A549 (cell line): ENCODE measurements at regions of chr6 and their contacts with region 1.

Region 1: DNA sequence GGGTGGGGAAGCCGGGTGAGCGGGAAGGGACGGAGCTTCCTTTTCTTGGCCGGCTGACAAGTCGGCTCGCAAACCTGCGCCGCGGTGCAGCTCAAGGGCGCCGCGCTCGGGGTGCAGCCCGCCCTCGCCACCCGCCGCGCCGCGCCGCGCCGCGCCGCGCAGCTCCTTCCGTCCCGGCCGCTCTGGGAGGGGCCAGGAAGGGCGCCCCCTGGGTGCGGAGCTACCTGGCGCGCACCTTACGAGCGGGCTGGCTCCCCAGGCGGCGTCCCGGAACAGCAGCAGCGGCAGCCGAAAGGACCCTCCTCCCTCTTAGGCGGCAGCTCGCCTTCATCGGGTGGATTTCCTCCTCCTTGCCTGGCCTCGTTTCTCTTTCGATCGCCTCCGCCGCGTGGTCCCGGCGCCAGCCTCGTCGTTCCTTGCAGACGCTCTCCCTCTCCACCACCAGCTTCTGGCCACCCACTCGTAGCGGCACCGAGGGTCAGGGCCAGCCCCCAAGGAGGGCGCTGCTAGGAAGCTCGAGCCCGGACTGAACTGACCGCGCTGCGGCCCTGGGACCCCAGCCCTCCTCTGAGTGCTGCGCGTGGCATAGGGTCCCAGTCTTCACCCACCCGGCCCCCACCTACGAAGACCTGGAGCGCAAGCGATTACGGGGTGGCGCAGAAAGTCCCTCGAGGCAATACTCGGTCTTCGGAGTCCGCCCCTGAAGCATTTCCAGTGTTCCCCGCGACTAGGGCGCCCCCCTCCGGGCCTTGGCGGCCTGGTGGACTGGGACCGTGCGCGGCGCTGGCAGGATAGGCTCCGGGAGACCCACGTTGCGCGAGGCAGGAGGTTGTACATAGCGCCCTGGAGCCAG is at the start of gene MAP3K5:
- DNase-seq: peak; percentile 36 to 84
- ATAC-seq: peak; percentile 87 to 92
- H3K4me3 ChIP-seq: peak within 1 kb of the TSS; percentile 83
- H3K27ac ChIP-seq: peak within 1 kb of the TSS; percentile 95
- H3K4me1 ChIP-seq: peaks cover 12% of the 10 kb centered on the region; the same call in 2 of the 3 replicates
- CTCF ChIP-seq: peak; percentile 57
- EP300 ChIP-seq: no peak
- POLR2A ChIP-seq: peak; percentile 30
- RAD21 ChIP-seq: peak; percentile 78 to 88
- polyA plus RNA-seq, gene MAP3K5: 4.1 and 4.4 TPM in 2 replicates

Region 2: GRCh38 chr6:136582711-136583471 is 209.7 kb before region 1 on chr6:
- CTCF ChIA-PET with region 1: interaction called, 41 read pairs
- POLR2A ChIA-PET with region 1: interaction called, 4 read pairs
- DNase-seq: peak; percentile 50 to 81
- ATAC-seq: peak; percentile 64 to 86; a peak in 4 of 6 replicates
- H3K4me3 ChIP-seq: no peak overlapping the region
- H3K27ac ChIP-seq: peak overlapping the region in 1 of 2 experiments; percentile 21; a peak in 3 of 6 replicates
- H3K4me1 ChIP-seq: peaks cover 13% of the 10 kb centered on the region
- CTCF ChIP-seq: peak; percentile 68
- EP300 ChIP-seq: no peak
- POLR2A ChIP-seq: no peak
- RAD21 ChIP-seq: peak; percentile 54 to 68

Region 3: GRCh38 chr6:136613477-136613876 is 179.2 kb before region 1 on chr6:
- CTCF ChIA-PET with region 1: interaction called, 17 read pairs
- POLR2A ChIA-PET with region 1: interaction called, 4 read pairs
- DNase-seq: peak in 1 of 2 experiments; percentile 36
- ATAC-seq: no peak
- H3K4me3 ChIP-seq: no peak overlapping the region
- H3K27ac ChIP-seq: peak overlapping the region; percentile 36 to 66; a peak in 4 of 6 replicates
- H3K4me1 ChIP-seq: peaks cover 39% of the 10 kb centered on the region
- CTCF ChIP-seq: no peak
- EP300 ChIP-seq: no peak
- POLR2A ChIP-seq: no peak
- RAD21 ChIP-seq: no peak

Region 4: DNA sequence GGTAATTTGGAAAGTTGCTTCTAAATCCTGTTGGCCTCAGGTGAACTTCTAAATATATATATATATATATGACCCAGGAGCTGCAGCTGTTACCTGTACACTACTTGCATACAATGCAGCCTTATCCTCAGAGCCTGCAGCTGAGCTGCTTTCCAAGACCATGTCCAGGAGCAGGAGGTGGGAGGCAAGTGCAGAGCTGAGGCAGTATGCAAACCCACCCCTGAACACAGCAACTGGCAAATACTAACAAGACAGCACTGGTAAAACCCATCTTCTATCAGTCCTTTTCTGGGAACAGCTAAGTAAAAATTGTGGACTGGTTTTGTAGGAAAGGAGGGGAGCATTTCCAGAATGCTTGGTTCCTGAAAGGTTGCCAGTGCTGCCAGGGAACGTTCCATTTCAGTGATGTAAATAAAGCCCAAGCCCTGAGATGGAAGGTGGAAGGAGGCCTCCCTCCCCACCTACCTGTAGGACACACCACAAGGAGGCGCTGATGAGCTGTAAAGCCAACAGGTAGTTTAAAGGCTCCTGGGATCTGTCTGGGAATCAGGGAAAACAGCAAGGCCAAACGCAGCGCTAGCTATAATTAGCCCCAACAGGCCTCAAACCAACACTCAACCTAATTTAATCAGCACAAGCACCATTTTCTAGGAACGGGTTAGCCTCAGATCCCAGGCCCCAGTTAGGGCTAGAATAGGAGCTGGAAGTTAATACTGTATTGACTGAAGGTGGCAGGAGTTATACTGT is 148.6 kb before region 1 on chr6:
- CTCF ChIA-PET with region 1: interaction called, 146 read pairs
- POLR2A ChIA-PET with region 1: interaction called, 15 read pairs
- DNase-seq: peak; percentile 26 to 83
- ATAC-seq: peak; percentile 99 to 100
- H3K4me3 ChIP-seq: no peak overlapping the region
- H3K27ac ChIP-seq: 0 out of 6 replicates have a peak overlapping the region, but pooled peaks of 1 of the 2 experiments have one; percentile 6
- H3K4me1 ChIP-seq: 0 out of 3 replicates have a peak, but pooled peaks cover 6% of the 10 kb centered on the region
- CTCF ChIP-seq: peak; percentile 84
- EP300 ChIP-seq: no peak
- POLR2A ChIP-seq: no peak
- RAD21 ChIP-seq: peak; percentile 84 to 85

Region 5: DNA sequence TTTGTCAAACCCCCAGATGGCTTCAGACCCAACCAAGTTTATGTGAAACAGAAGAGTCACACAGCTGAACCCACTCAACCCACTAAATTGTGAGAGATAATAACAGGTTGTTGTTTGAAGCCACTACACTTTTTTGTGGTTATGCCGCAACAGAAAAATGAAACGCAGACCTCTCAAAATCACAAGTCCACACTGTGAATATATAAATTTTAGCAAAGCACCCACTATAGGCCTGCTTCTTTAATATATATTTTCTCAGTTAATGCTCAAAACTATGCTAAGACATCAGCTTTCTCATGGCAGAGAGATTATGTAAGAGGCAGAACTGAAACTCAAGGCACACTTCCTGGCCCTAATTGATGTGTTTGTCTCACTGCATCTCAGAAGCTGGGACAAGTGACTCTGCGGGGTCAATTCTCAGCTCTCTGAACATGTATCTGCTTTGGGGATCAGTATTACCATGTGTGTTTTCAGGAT is 28.1 kb before region 1 on chr6:
- CTCF ChIA-PET with region 1: interaction called, 10 read pairs
- POLR2A ChIA-PET with region 1: no interaction called
- DNase-seq: no peak
- ATAC-seq: no peak
- H3K4me3 ChIP-seq: no peak overlapping the region
- H3K27ac ChIP-seq: no peak overlapping the region
- H3K4me1 ChIP-seq: peaks cover 7% of the 10 kb centered on the region; the same call in 1 of the 3 replicates
- CTCF ChIP-seq: no peak
- EP300 ChIP-seq: no peak
- POLR2A ChIP-seq: no peak
- RAD21 ChIP-seq: no peak